Gastrocnemius medialis (tissue), 4 donors: ENCODE measurements at regions of chr19 and their contacts with region 1.

Region 1: DNA sequence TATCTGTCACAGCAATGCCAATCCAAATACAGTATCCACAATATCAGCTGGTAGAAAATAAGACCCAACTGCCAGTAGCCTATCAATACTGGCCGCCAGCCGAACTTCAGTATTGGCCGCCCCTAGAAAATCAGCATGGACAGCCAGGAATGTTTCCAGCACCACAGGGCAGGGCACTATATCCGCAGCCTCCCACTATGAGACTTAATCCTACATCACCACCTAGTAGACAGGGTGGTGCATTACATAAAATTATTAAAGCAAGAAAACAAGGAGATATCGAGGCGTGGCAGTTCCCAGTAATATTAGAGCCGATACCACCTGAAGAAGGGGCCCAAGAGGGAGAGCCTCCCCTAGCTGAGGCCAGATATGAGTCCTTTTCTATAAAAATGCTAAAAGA is 111.3 kb downstream of the ZNF486 start:
- DNase-seq: no peak
- ATAC-seq: no peak
- H3K4me3 ChIP-seq: no peak overlapping the region
- H3K27ac ChIP-seq: no peak overlapping the region
- H3K4me1 ChIP-seq: no peaks in the 10 kb centered on the region
- H3K27me3 ChIP-seq: no peaks in the 10 kb centered on the region
- CTCF ChIP-seq: peak in 3 of 5 experiments; percentile 4 to 73 (median 42)
- POLR2A ChIP-seq: no peak

Region 2: DNA sequence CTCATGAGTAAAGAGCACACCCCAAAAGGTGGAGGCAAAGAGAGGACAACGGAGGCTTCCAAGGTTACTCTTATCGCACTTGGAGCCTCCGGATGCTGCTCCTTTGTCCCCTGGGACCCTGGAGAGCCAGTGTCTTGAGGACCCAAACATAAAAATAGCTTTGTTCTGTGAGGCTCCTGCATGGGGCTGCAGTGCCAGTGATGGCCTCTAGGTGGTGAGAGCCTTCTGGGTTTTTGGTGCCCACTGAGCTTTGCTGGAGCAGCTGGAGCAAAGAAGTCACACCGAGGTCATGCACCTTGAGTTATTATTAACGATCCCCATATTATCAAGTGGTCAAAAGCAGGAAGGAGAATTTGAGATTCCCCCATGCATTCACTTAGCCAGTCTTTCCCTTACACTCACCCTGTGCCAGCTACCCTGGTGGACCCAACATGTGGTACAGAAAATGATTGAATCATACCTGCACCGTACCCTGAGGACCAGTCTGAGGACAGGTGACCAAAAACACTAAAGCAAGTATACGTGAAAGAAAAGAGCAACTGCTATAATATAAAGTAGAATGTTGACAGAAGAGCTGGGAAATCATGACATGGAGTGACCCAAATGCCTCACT is 280.6 kb before region 1 on chr19:
- in situ Hi-C with region 1: loop called in 1 of 4 experiments (anchors 25 kb)
- intact Hi-C with region 1: no loop called
- DNase-seq: no peak
- ATAC-seq: no peak
- H3K4me3 ChIP-seq: no peak overlapping the region
- H3K27ac ChIP-seq: no peak overlapping the region
- H3K4me1 ChIP-seq: no peaks in the 10 kb centered on the region
- H3K27me3 ChIP-seq: no peaks in the 10 kb centered on the region
- CTCF ChIP-seq: peak in 4 of 5 experiments; percentile 20 to 72 (median 45)
- POLR2A ChIP-seq: no peak